GM13977 (cell line): ENCODE measurements at regions of chr11 and their contacts with region 1.

Region 1: GRCh38 chr11:32829680-32830412 is at the start of gene PRRG4:
- DNase-seq: peak; percentile 85
- CTCF ChIP-seq: no peak

Region 2: GRCh38 chr11:32586572-32587190 is 243.2 kb before region 1 on chr11:
- in situ Hi-C with region 1: no loop called
- DNase-seq: no peak
- CTCF ChIP-seq: peak; percentile 28

Region 3: DNA sequence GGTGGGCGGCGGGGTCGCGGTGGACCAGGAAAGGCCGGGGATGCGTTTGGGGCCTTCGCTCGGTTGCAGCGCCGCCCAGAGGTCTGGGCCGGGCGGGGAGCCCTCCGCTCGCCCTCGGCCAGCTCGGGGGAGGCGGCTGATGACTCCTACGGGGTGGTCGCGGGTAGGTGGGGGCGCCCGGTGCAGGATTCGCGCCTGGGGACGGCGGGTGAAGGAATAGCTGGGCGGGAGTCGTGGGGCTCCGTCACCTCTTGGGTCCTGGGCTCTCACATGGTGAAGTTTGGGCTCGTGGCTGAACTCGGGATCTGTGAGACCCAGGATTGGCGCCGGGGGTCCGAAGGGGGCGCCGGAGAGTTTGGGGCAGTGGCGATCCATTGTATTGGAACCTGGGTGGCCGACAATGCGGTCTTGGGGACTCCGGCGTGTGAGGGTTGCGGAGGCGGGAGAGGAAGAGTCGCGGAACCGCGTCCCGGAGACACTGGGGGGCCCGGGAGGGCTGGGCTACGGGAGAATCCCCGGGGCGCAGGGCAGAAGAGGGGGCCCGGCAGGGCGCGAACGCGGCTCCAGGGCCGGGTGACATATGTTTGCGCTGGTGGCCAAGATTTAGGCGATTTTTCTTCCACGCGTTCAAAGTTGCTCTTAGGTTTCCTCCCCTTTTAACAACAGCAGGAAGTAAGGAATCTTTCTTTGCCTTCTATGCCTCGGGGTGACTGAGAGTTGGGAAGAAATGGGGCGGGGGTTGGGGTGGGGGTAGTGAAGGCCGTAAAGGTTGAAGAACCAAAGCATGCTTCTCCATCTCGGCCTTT is 63.7 kb after region 1 on chr11:
- in situ Hi-C with region 1: loop called (anchors 10 kb)
- DNase-seq: peak; percentile 79
- CTCF ChIP-seq: peak; percentile 71